Calu3 (cell line): ENCODE measurements at regions of chr6 and their contacts with region 1.

Region 1: DNA sequence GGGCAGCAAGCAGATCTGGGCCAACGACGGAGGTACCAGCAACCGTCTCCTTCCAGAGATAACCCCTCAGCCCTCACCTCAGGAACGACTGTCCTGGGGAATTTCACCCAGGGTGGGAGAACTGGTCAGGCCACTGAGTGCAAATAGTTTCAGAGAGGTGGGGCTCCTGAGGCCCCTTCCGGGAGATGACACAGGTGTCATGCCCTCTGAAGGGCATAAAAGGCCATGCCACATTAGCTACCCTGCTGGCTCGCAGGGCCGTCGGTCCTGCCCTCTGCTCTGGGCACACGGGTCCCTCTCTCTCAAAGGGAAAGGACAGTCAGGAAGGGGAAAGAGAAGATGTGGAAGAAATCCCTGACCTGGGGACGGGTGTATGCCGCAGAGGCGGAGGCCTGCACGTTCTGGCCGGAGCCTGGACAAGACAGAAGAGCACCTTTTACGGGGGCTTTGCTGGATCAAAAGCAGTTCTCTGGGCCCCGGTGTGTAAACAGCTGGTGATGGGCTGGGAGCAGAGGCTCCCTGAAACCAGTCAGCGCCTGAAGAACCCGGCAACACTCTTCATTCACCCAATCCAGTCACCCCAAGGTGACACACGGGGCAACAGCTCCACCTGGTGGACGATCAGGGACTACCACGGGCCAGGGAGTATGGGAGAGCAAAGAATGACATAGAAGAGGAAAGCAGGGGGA is 6.4 kb upstream of the TAF8 start:
- DNase-seq: peak; percentile 95
- H3K4me3 Mint-ChIP-seq: no peak overlapping the region
- H3K27ac Mint-ChIP-seq: peak overlapping the region; percentile 50
- H3K4me1 Mint-ChIP-seq: peaks cover 44% of the 10 kb centered on the region
- H3K27me3 Mint-ChIP-seq: no peaks in the 10 kb centered on the region
- CTCF ChIP-seq: peak; percentile 95

Region 2: GRCh38 chr6:41779793-41780545 is 264.0 kb before region 1 on chr6 and contains the start of gene FRS3:
- CTCF ChIA-PET with region 1: interaction called, 5 read pairs
- intact Hi-C with region 1: loop called (anchors 1 kb)
- DNase-seq: peak; percentile 99
- H3K4me3 Mint-ChIP-seq: peak within 1 kb of the TSS; percentile 77
- H3K27ac Mint-ChIP-seq: peak within 1 kb of the TSS; percentile 60
- H3K4me1 Mint-ChIP-seq: peaks cover 35% of the 10 kb centered on the region
- H3K27me3 Mint-ChIP-seq: no peaks in the 10 kb centered on the region
- CTCF ChIP-seq: peak; percentile 90
- total RNA-seq, gene FRS3: 5.0 and 6.6 TPM in 2 replicates

Region 3: GRCh38 chr6:41801380-41801779 is 242.6 kb before region 1 on chr6:
- CTCF ChIA-PET with region 1: interaction called, 9 read pairs
- intact Hi-C with region 1: loop called (anchors 1 kb)
- DNase-seq: peak; percentile 20
- H3K4me3 Mint-ChIP-seq: no peak overlapping the region
- H3K27ac Mint-ChIP-seq: no peak overlapping the region
- H3K4me1 Mint-ChIP-seq: no peaks in the 10 kb centered on the region
- H3K27me3 Mint-ChIP-seq: no peaks in the 10 kb centered on the region
- CTCF ChIP-seq: no peak

Region 4: GRCh38 chr6:41846666-41847237 is 197.2 kb before region 1 on chr6:
- CTCF ChIA-PET with region 1: interaction called, 10 read pairs
- intact Hi-C with region 1: loop called (anchors 1 kb)
- DNase-seq: peak; percentile 88
- H3K4me3 Mint-ChIP-seq: no peak overlapping the region
- H3K27ac Mint-ChIP-seq: no peak overlapping the region
- H3K4me1 Mint-ChIP-seq: peaks cover 14% of the 10 kb centered on the region
- H3K27me3 Mint-ChIP-seq: no peaks in the 10 kb centered on the region
- CTCF ChIP-seq: peak; percentile 80

Region 5: DNA sequence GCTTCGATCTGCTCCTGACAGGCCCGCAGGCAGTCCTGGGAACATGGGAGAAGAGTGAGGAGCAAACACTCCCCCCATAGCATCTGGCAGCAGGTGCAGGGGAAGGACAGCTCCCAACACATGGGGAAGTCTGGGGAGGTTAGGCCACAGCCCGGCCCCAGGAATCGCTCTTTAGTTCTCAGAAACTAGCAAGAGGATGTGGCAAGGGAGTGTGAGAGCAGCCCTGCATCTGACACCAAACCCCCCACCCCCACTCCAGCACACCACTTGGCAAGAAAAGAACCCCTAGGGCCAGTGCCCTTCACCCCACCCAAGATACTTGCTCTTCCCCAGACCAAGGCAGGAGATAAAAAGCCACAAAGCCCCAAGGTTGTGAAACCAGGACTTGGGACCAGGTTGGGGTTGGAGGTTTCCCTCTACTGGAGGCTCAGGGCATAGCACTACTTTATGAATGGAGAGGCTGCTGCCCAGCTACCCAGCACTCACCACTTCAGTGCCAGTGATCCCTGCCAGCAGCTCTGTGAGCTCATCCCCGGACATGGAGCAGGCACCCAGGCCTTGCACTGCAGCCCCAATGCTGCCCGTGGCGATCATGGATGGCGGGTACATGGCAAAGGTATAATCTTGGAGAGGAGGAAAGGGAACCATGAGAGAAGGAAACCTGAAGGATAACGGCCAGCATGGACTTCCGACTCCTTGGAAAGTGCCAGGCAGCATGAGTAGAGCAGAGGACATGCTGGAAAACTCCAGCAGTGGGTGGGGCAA is 107.7 kb before region 1 on chr6:
- CTCF ChIA-PET with region 1: interaction called, 3 read pairs
- intact Hi-C with region 1: loop called (anchors 1 kb)
- DNase-seq: peak; percentile 80
- H3K4me3 Mint-ChIP-seq: no peak overlapping the region
- H3K27ac Mint-ChIP-seq: no peak overlapping the region
- H3K4me1 Mint-ChIP-seq: peaks cover 30% of the 10 kb centered on the region
- H3K27me3 Mint-ChIP-seq: no peaks in the 10 kb centered on the region
- CTCF ChIP-seq: peak; percentile 86